ENCODE measurements at regions of chr5 and their contacts with region 1.

Region 1: DNA sequence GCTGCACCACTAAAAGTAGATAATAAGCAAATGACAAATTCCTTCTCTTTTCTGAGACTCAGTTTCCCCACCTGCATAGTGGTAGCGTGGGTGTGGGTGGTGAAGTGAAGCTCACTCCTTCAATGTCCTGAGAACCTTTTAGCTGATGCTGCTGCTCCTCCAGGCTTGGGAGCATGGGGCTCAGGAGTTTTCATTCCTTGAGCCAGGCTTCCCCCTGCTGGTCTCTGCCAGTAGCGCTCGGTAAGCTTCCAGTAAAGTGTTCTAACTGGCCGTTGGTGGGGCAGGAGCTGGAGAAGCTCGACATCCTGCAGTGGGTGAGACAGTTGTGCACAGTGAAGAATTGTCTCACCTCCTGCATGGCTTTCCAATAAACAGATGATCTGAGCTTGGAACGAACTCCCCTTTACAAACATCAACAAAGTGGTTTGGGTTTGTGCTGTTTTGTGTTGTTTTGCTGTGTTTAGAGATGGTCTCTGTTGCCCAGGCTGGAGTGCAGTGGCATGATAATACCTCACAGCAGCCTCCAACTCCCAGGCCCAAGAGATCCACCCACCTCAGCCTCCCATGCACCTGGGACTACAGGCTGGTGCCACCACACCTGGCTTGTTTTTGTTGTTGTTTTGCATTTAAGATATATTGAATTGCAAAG is 34.6 kb downstream of the SPARC start:
- DNase-seq: peak; percentile 72
- H3K4me3 Mint-ChIP-seq: no peak overlapping the region
- H3K27ac Mint-ChIP-seq: no peak overlapping the region
- H3K4me1 Mint-ChIP-seq: no peaks in the 10 kb centered on the region
- H3K27me3 Mint-ChIP-seq: peaks cover 9% of the 10 kb centered on the region

Region 2: DNA sequence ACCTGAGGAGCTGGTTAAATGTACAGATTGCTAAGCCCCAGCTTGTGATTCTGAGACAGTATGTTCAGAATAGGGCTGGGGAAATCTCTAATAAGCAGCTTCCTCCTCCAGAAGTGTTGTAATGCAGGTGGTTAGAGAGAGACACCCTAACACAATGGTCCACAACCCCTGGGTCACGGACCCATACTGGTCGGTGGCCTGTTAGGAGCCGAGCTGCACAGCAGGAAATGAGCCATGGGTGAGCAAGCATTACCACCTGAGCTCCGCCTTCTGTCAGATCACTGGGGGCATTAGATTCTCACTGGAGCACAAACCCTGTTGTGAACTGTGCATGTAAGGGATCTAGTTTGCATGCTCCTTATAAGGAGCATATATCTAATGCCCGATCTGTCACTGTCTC is 142.9 kb before region 1 on chr5:
- CTCF ChIA-PET with region 1: no interaction called
- POLR2A ChIA-PET with region 1: no interaction called
- DNase-seq: no peak
- H3K4me3 Mint-ChIP-seq: no peak overlapping the region
- H3K27ac Mint-ChIP-seq: no peak overlapping the region
- H3K4me1 Mint-ChIP-seq: no peaks in the 10 kb centered on the region
- H3K27me3 Mint-ChIP-seq: no peaks in the 10 kb centered on the region

Region 3: GRCh38 chr5:151523335-151523734 is 128.8 kb before region 1 on chr5:
- CTCF ChIA-PET with region 1: interaction called, 15 read pairs
- POLR2A ChIA-PET with region 1: no interaction called
- DNase-seq: peak; percentile 56
- H3K4me3 Mint-ChIP-seq: no peak overlapping the region
- H3K27ac Mint-ChIP-seq: no peak overlapping the region
- H3K4me1 Mint-ChIP-seq: no peaks in the 10 kb centered on the region
- H3K27me3 Mint-ChIP-seq: no peaks in the 10 kb centered on the region

Region 4: GRCh38 chr5:151751091-151751490 is 99.0 kb after region 1 on chr5:
- CTCF ChIA-PET with region 1: interaction called, 17 read pairs
- POLR2A ChIA-PET with region 1: no interaction called
- DNase-seq: no peak
- H3K4me3 Mint-ChIP-seq: no peak overlapping the region
- H3K27ac Mint-ChIP-seq: peak overlapping the region; percentile 1
- H3K4me1 Mint-ChIP-seq: peaks cover 59% of the 10 kb centered on the region
- H3K27me3 Mint-ChIP-seq: no peaks in the 10 kb centered on the region

Region 5: DNA sequence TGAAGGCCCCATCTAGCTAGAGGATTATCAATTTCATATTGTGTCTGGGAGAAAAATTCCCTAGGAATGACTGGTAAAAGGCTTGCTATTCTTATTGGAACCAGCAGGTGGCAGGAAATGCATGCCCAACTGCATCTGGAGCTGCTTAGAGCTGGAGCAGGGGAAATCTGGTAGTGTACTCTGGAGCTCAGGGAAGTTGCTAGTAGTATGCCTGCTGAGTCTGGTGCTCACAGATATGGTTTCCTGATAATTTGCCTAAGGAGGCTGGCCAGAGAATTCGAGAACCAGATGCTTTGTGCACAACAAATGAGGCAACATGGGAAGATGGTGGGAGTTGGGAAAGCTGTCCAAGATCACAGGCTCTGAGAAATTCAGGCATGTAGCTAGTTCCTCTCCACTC is 173.3 kb after region 1 on chr5:
- CTCF ChIA-PET with region 1: no interaction called
- POLR2A ChIA-PET with region 1: no interaction called
- DNase-seq: peak; percentile 37
- H3K4me3 Mint-ChIP-seq: no peak overlapping the region
- H3K27ac Mint-ChIP-seq: no peak overlapping the region
- H3K4me1 Mint-ChIP-seq: peaks cover 4% of the 10 kb centered on the region
- H3K27me3 Mint-ChIP-seq: no peaks in the 10 kb centered on the region

Measured in activated CD4-positive, alpha-beta memory T cell treated with anti-CD3 and anti-CD28 coated beads, Interleukin-2, amount 10 ng/mL, durations not matched to agents 7 days and 5 days (primary cell).